Esophagus squamous epithelium (tissue), 5 donors: ENCODE measurements at regions of chr1 and their contacts with region 1.

Region 1: GRCh38 chr1:114979278-114979891 is 50.2 kb upstream of the TSHB start:
- DNase-seq: no peak
- H3K4me3 ChIP-seq: no peak overlapping the region
- H3K27ac ChIP-seq: no peak overlapping the region
- H3K4me1 ChIP-seq: no peaks in the 10 kb centered on the region
- H3K27me3 ChIP-seq: peaks cover 0 to 7% (median 0%) of the 10 kb centered on the region in 4 donors
- CTCF ChIP-seq: peak; percentile 62 to 87 (median 81)
- POLR2A ChIP-seq: no peak

Region 2: GRCh38 chr1:115052454-115053083 is 73.2 kb after region 1 on chr1:
- intact Hi-C with region 1: loop called (anchors 5 kb)
- DNase-seq: no peak
- H3K4me3 ChIP-seq: peak overlapping the region in 1 of 4 donors; percentile 35
- H3K27ac ChIP-seq: peak overlapping the region in 3 of 4 donors; percentile 17 to 72 (median 51)
- H3K4me1 ChIP-seq: peaks cover 0 to 27% (median 0%) of the 10 kb centered on the region in 3 donors
- H3K27me3 ChIP-seq: no peaks in the 10 kb centered on the region
- CTCF ChIP-seq: peak; percentile 72 to 88 (median 84)
- POLR2A ChIP-seq: no peak

Region 3: GRCh38 chr1:115088871-115089419 is 109.6 kb after region 1 on chr1:
- intact Hi-C with region 1: no loop called
- DNase-seq: no peak
- H3K4me3 ChIP-seq: peak overlapping the region; percentile 37 to 81 (median 67)
- H3K27ac ChIP-seq: peak overlapping the region; percentile 67 to 91 (median 88)
- H3K4me1 ChIP-seq: peaks cover 0 to 53% (median 8%) of the 10 kb centered on the region in 3 donors
- H3K27me3 ChIP-seq: peaks cover 0 to 15% (median 0%) of the 10 kb centered on the region in 4 donors
- CTCF ChIP-seq: no peak
- POLR2A ChIP-seq: no peak

Region 4: DNA sequence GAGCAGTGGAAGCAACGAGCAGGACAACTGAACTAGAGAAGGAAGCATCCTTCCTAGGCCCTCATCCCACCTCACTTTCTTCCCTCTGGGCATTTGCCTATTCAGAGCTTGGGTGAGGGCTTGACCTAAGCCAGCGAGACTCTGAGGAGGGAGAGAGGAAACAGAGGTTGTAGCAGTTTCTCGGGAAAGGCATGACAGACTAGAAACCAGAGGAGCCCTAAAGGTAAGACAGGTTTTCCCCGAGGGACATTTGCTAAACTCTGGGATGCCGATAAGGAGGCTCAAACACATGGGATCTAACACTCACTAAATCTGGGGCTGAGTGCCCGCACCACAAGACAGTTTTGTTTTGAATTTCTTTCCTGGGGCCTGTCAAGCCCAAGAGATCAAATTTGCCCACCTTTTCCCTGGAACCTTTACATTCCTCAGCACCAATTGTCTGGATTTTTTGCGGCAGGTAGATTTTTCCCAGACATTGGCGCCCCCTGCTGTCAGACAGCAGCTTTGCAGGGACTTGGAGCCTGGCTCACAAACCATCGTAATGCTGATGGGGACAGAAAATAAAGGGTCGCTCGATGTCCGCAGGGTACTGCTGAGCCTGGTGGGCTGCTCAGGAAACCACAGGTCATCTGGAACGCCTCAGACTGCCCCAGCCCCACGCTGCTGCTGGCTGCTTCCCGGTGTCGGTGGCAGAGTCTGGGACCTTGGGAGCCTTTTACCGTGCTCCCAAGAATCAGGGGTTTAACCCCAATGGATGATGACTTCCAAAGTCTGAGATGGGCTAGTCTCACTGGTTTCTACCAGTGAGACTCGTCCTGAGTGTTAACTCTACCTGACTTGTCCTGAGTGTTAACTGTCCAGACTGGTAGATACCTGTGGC is 133.4 kb after region 1 on chr1:
- intact Hi-C with region 1: loop called (anchors 2 kb)
- DNase-seq: no peak
- H3K4me3 ChIP-seq: no peak overlapping the region
- H3K27ac ChIP-seq: no peak overlapping the region
- H3K4me1 ChIP-seq: peaks cover 0 to 9% (median 0%) of the 10 kb centered on the region in 3 donors
- H3K27me3 ChIP-seq: no peaks in the 10 kb centered on the region
- CTCF ChIP-seq: peak; percentile 79 to 94 (median 90)
- POLR2A ChIP-seq: no peak